ENCODE measurements at regions of chr2 and their contacts with region 1.

Region 1: DNA sequence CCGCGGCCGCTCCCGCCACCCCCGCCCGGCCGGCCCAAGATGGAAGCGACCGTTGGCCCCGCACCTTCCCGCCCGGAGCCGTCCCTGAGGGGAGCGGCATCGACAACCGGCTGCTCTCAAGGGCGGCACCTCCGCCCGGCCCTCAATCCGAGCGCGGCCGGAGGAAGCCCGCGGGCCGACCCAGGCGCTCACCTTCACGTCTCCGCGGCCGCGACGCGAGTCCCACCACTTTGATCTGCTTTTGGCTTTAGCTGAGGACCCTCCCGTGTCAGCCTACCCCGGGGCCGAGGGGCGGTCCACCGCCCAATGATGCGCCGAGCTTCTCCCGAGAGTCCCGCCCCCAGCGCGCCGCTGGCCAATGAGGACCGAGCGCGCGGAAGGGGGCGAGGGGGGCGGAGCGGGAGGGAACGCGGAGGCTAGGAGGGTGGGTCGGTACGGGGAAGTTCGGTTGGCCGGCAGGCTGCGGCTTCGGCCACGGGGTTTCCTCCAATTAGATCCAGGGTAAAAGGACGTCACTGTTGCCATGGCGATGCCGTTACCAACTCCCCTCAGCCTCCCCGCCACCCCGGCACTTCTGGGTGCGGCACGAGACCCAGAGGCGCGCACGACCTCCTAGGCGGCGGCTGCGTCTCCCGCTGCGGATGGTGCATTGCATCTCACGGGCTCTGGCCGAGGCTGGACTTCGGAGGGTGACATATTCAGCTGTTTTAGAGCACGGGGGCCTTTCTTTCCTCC is at the start of gene YWHAQ:
- DNase-seq: peak; percentile 97
- ATAC-seq: peak; percentile 93
- H3K4me3 ChIP-seq: peak within 1 kb of the TSS; percentile 85 to 100 (median 97)
- H3K27ac ChIP-seq: peak within 1 kb of the TSS; percentile 93
- H3K4me1 ChIP-seq: peaks cover 62% of the 10 kb centered on the region
- H3K27me3 ChIP-seq: peaks cover 0 to 25% of the 10 kb centered on the region in 2 experiments; a peak in 3 of 5 replicates
- CTCF ChIP-seq: no peak
- EP300 ChIP-seq: peak; percentile 55 to 75; a peak in 2 of 4 replicates
- POLR2A ChIP-seq: peak; percentile 96 to 99
- RAD21 ChIP-seq: peak; percentile 20; the same call in 1 of the 2 replicates
- total RNA-seq, gene YWHAQ: 304 and 420 TPM in 2 replicates

Region 2: DNA sequence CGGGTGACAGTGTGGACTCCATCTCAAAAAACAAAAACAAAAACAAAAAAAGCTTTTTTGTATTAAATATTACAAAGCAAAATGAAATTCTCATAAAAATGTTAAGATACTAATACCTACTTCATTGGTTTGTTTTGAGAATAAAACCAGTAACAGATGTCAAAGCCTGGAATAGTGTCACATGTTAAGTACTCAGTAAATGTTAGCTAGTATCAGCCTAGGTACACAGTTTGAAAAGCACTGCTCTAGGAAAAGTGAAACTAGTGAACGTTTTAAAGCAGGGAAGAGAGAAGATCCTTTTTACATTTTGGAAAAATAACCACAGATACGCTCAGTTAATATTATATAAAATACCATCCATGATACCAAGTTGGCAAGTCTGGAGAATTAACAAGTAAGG is 38.2 kb before region 1 on chr2:
- CTCF ChIA-PET with region 1: no interaction called
- POLR2A ChIA-PET with region 1: interaction called, 3 read pairs
- in situ Hi-C with region 1: no loop called
- intact Hi-C with region 1: loop called (anchors 1 kb)
- DNase-seq: no peak
- ATAC-seq: no peak
- H3K4me3 ChIP-seq: no peak overlapping the region
- H3K27ac ChIP-seq: no peak overlapping the region
- H3K4me1 ChIP-seq: no peaks in the 10 kb centered on the region
- H3K27me3 ChIP-seq: no peaks in the 10 kb centered on the region
- CTCF ChIP-seq: no peak
- EP300 ChIP-seq: no peak
- POLR2A ChIP-seq: no peak
- RAD21 ChIP-seq: no peak

Region 3: GRCh38 chr2:9610781-9611548 is 20.0 kb before region 1 on chr2:
- CTCF ChIA-PET with region 1: no interaction called
- POLR2A ChIA-PET with region 1: interaction called, 12 read pairs
- in situ Hi-C with region 1: no loop called
- intact Hi-C with region 1: no loop called
- DNase-seq: no peak
- ATAC-seq: peak; percentile 25; the same call in 2 of the 3 replicates
- H3K4me3 ChIP-seq: no peak overlapping the region
- H3K27ac ChIP-seq: no peak overlapping the region
- H3K4me1 ChIP-seq: peaks cover 39% of the 10 kb centered on the region
- H3K27me3 ChIP-seq: no peaks in the 10 kb centered on the region
- CTCF ChIP-seq: no peak
- EP300 ChIP-seq: no peak
- POLR2A ChIP-seq: no peak
- RAD21 ChIP-seq: no peak

Region 4: GRCh38 chr2:9618410-9618809 is 12.5 kb before region 1 on chr2:
- CTCF ChIA-PET with region 1: no interaction called
- POLR2A ChIA-PET with region 1: interaction called, 31 read pairs
- in situ Hi-C with region 1: no loop called
- intact Hi-C with region 1: no loop called
- DNase-seq: no peak
- ATAC-seq: no peak
- H3K4me3 ChIP-seq: no peak overlapping the region
- H3K27ac ChIP-seq: no peak overlapping the region
- H3K4me1 ChIP-seq: peaks cover 40% of the 10 kb centered on the region
- H3K27me3 ChIP-seq: no peaks in the 10 kb centered on the region
- CTCF ChIP-seq: no peak
- EP300 ChIP-seq: no peak
- POLR2A ChIP-seq: no peak
- RAD21 ChIP-seq: no peak

Region 5: GRCh38 chr2:9656270-9656766 is 25.4 kb after region 1 on chr2:
- CTCF ChIA-PET with region 1: no interaction called
- POLR2A ChIA-PET with region 1: interaction called, 12 read pairs
- in situ Hi-C with region 1: no loop called
- intact Hi-C with region 1: no loop called
- DNase-seq: peak; percentile 53
- ATAC-seq: peak; percentile 56
- H3K4me3 ChIP-seq: no peak overlapping the region
- H3K27ac ChIP-seq: no peak overlapping the region
- H3K4me1 ChIP-seq: peaks cover 48% of the 10 kb centered on the region
- H3K27me3 ChIP-seq: peaks cover 0 to 6% of the 10 kb centered on the region in 2 experiments; a peak in 1 of 5 replicates
- CTCF ChIP-seq: no peak
- EP300 ChIP-seq: no peak
- POLR2A ChIP-seq: no peak
- RAD21 ChIP-seq: no peak

Region 6: GRCh38 chr2:9843229-9844035 is 212.5 kb after region 1 on chr2 and contains the start of gene TAF1B:
- CTCF ChIA-PET with region 1: no interaction called
- POLR2A ChIA-PET with region 1: interaction called, 14 read pairs
- in situ Hi-C with region 1: no loop called
- intact Hi-C with region 1: no loop called
- DNase-seq: peak; percentile 90
- ATAC-seq: peak; percentile 94
- H3K4me3 ChIP-seq: peak within 1 kb of the TSS; percentile 70 to 92 (median 81)
- H3K27ac ChIP-seq: peak within 1 kb of the TSS; percentile 74
- H3K4me1 ChIP-seq: peaks cover 39% of the 10 kb centered on the region
- H3K27me3 ChIP-seq: no peaks in the 10 kb centered on the region; a peak in 2 of 5 replicates
- CTCF ChIP-seq: peak; percentile 68
- EP300 ChIP-seq: peak in 1 of 2 experiments; percentile 29; a peak in 2 of 4 replicates
- POLR2A ChIP-seq: peak; percentile 69 to 84
- RAD21 ChIP-seq: peak; percentile 71
- total RNA-seq, gene TAF1B: 27.7 and 34.0 TPM in 2 replicates

Measured in HepG2 (cell line).